OCI-LY7 (cell line): ENCODE measurements at regions of chr3 and their contacts with region 1.

Region 1: DNA sequence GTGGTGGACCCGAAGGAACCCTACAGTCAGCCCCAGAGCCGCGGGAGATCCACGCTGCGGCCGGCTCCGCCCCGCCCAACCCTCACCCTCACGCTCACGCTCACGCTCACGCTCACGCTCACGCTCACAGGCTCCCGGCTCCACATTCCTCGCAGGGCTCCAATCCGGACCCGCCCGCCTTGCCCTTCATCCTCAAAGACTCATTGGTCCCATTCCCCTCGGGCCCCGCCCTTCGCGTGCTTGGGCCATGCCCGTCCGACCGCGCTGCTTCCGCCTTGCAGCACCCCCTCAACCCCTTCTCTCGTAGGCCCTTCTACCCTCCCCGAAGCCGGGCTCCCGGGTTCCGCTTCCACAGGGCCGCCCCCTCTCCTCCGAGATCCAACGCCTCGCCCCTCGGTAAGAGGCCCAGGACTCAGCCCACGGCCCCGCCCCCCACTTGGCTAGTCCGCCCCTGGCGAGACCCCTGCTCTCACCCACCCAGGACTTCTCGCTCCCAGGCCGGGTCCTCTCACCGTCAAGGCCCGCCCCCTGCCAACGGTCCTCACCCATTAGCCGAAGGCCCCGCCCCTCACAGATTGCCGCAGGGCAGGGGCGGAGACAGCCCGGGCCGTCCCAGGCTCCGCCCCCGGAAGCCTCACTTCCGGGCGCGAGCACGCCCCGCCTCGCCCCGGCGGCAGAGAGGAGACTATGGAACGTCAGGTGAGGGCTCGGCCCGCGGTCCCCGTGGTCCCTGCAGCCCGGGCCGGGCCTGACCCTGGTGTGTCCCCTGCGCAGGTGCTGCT is at the start of gene APEH:
- DNase-seq: peak; percentile 98
- H3K4me3 ChIP-seq: peak within 1 kb of the TSS; percentile 89
- H3K27ac ChIP-seq: peak within 1 kb of the TSS; percentile 84
- H3K4me1 ChIP-seq: peaks cover 17% of the 10 kb centered on the region
- CTCF ChIP-seq: no peak
- total RNA-seq, gene APEH: 94.8 and 112 TPM in 2 replicates

Region 2: GRCh38 chr3:49021813-49022687 is 651.9 kb before region 1 on chr3 and contains the start of gene NDUFAF3:
- CTCF ChIA-PET with region 1: no interaction called
- POLR2A ChIA-PET with region 1: no interaction called
- intact Hi-C with region 1: loop called (anchors 2 kb)
- DNase-seq: peak; percentile 99
- H3K4me3 ChIP-seq: peak within 1 kb of the TSS; percentile 80
- H3K27ac ChIP-seq: peak within 1 kb of the TSS; percentile 93
- H3K4me1 ChIP-seq: peaks cover 65% of the 10 kb centered on the region
- CTCF ChIP-seq: peak; percentile 84
- total RNA-seq, gene NDUFAF3: 255 and 309 TPM in 2 replicates

Region 3: GRCh38 chr3:49469936-49470713 is 203.8 kb before region 1 on chr3 and contains the start of gene DAG1:
- CTCF ChIA-PET with region 1: no interaction called
- POLR2A ChIA-PET with region 1: no interaction called
- intact Hi-C with region 1: loop called (anchors 2 kb)
- DNase-seq: peak; percentile 97
- H3K4me3 ChIP-seq: peak within 1 kb of the TSS; percentile 90
- H3K27ac ChIP-seq: peak within 1 kb of the TSS; percentile 80
- H3K4me1 ChIP-seq: peaks cover 22% of the 10 kb centered on the region
- CTCF ChIP-seq: no peak
- total RNA-seq, gene DAG1: 10.6 and 10.9 TPM in 2 replicates

Region 4: GRCh38 chr3:49539659-49540560 is 134.0 kb before region 1 on chr3:
- CTCF ChIA-PET with region 1: interaction called, 10 read pairs
- POLR2A ChIA-PET with region 1: interaction called, 18 read pairs
- intact Hi-C with region 1: loop called (anchors 1 kb)
- DNase-seq: peak; percentile 93
- H3K4me3 ChIP-seq: peak overlapping the region; percentile 69
- H3K27ac ChIP-seq: no peak overlapping the region
- H3K4me1 ChIP-seq: peaks cover 13% of the 10 kb centered on the region
- CTCF ChIP-seq: peak; percentile 89